OCI-LY7 (cell line): ENCODE measurements at regions of chr15 and their contacts with region 1.

Region 1: DNA sequence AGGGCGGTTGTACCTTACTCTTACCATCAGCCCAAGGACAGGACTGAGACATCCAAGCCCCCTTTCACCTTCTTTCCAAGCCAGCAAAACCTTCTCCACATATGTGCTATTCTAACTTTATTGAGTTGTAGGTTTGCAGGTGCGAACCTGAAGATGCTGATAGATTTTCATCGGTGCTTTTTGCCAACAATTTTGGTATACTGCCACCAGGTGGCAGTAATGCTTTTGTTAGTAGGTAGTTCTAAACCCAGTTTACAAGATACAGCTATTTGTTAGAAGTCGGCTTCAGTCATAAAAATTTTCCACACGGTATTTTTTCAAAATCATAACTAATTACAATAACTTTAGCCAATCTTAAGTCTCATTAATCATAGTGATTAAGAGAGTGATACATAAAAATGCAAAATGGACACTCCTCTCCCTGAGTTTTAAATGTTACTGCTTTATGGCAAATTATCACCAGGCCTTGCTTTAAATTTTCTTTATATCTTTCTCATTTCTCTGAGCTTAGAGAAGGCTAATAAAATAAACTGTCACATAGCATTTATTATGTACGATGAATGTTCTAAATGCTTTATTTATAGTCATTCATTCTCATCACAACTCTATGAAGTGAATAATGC is 636 bp downstream of the TBC1D21 start:
- DNase-seq: peak; percentile 64
- H3K4me3 ChIP-seq: no peak overlapping the region
- H3K27ac ChIP-seq: no peak overlapping the region
- H3K4me1 ChIP-seq: no peaks in the 10 kb centered on the region
- CTCF ChIP-seq: peak; percentile 92

Region 2: DNA sequence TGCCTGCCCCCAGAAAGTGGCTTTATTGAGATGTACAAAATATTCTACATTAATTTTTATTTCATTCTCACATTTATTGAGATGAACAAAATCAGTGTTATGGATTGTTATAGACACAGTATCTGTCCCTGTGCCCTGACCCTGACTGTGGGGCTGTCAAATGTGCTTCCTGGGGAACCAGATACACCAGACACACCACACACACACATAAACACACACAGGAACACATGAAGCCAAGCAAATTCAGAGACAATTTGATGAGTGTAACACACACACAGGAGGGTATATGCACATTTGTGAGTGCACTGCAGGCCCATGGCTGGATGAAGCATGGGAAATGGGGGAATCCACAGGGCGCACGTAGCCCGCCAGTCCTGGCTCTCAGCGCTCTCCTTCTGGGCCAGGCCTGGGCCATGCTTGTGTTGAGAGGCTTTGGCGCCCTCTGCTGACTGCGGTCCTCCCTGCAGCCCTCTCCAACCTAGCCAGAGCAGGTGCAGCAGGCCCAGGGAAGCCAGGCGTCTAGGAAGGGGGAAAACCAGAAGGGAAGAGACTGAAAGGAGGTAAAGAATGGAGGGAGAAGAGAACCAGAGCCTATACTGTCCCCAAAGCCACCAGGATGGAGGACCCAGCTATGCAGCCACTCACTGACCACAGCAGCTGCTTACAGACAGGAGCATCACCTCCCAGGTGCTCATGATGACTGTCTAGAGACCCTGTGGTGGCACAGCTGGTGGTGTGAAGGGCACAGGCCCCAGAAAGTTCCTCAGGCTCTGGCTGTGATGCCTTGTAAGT is 34.2 kb after region 1 on chr15:
- CTCF ChIA-PET with region 1: no interaction called
- POLR2A ChIA-PET with region 1: no interaction called
- intact Hi-C with region 1: loop called (anchors 1 kb)
- DNase-seq: peak; percentile 60
- H3K4me3 ChIP-seq: no peak overlapping the region
- H3K27ac ChIP-seq: no peak overlapping the region
- H3K4me1 ChIP-seq: no peaks in the 10 kb centered on the region
- CTCF ChIP-seq: peak; percentile 85